ENCODE measurements at regions of chr9 and their contacts with region 1.

Region 1: DNA sequence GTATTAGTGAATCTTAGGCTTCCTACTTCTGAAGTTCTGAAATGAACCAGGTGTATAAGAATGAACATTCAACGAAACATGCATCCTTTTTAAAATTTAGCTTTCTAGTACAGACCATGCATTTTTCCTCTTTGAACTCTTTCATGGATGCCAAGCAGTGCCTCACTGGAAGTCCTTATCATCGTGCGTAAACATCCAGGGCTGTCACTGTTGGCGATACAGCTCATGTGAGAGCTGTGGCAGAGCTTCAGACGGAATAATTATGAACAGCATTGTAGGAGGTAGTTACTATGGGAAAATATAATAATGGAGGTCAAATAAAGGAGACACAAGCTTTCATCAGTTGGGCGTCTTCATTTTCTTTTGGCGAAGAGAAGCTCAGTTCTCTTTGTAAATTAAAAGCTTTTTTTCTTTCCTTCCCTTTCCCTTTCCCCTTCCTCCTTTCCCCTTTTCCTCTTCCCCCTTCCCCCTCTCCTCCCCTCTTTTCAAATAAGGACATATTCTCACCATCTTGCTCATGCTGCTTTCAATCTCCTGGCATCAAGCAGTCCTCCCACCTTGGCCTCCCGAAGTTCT is 167.3 kb downstream of the KDM4C start:
- DNase-seq: peak in 1 of 5 donors; percentile 35
- ATAC-seq: peak in 3 of 4 donors; percentile 55 to 79 (median 64)
- H3K4me3 ChIP-seq: no peak overlapping the region
- H3K27ac ChIP-seq: no peak overlapping the region
- H3K4me1 ChIP-seq: peaks cover 0 to 18% (median 3%) of the 10 kb centered on the region in 12 donors
- H3K27me3 ChIP-seq: no peaks in the 10 kb centered on the region
- CTCF ChIP-seq: no peak
- POLR2A ChIP-seq: no peak

Region 2: DNA sequence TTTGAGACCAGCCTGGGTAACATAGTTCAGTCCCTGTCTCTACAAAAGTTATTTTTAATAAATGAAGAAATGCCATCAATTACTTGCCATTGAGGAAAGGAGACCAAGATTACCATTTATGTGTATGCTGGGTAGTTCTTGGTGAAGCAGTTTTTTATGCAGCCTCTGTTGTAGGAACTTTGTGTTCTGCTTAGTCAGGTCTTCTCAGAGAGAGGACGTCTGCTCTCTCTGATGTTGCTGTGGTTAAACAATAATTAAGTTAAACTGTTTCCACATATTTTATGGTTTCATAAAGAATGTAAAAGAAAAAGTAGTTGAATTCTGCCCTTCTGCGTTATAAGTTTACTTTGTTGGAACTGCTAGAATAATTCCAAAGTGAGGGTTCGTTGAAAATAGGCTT is 43.2 kb after region 1 on chr9:
- intact Hi-C with region 1: loop called in 1 of 10 experiments (anchors 5 kb)
- DNase-seq: no peak
- ATAC-seq: no peak
- H3K4me3 ChIP-seq: no peak overlapping the region
- H3K27ac ChIP-seq: no peak overlapping the region
- H3K4me1 ChIP-seq: peaks cover 0 to 6% (median 0%) of the 10 kb centered on the region in 12 donors
- H3K27me3 ChIP-seq: no peaks in the 10 kb centered on the region
- CTCF ChIP-seq: no peak
- POLR2A ChIP-seq: no peak

Measured in heart left ventricle (tissue), 16 donors.